Mammary epithelial cell (primary cell): ENCODE measurements at regions of chr2 and their contacts with region 1.

Region 1: DNA sequence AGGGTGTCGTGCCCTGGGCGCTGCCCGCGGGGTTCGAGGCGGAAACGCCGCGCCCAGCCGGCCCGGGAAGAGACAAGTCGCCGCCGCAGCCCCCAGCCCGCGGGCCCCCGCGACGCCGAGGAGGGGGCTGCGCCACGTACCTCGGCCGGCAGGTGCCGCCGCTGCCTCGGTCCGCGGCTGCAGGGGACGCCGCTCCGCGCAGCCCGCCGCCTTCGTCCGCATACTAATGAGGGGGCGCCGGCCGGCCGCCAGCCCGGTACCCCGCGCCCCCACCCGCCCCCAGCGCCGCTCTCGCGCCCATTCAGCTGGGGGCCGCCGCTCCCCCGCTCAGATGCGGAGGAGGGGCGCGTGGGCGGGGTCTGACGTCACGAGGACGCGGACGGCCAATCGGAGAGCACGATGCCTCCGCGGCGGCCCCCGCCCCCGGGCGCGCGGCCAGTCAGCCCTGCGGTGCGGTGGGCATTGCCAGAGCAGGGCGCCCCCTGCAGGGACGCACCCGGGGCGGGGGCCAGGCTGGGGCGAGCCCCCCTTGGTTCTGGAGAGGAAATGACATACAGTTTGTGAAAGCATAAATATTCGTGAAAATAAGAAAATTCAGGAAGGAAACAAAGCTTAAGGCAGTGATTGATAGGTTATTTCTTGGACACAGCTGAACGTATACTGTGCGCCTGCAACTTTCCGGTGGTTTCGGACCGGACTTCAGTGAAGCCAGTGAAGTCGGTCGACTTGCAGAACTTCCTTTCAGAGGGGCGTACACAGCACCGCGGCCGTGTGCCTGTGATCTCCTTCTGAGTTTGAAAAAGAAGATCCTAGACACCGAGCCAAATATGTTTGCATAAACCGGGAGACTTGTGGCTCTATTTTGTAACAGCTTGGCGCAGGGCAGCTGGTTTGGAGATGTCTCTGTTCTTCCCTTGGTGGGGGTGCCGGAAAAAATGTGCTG is at the start of gene ST3GAL5:
- DNase-seq: peak; percentile 72
- H3K4me3 ChIP-seq: peak within 1 kb of the TSS; percentile 66 to 88 (median 70)
- H3K27ac ChIP-seq: peak within 1 kb of the TSS; percentile 56
- H3K4me1 ChIP-seq: peaks cover 55% of the 10 kb centered on the region
- H3K27me3 ChIP-seq: no peaks in the 10 kb centered on the region
- CTCF ChIP-seq: peak; percentile 68 to 69
- total RNA-seq, gene ST3GAL5: 12.0 to 25.1 TPM

Region 2: GRCh38 chr2:85826990-85827878 is 61.7 kb before region 1 on chr2:
- CTCF ChIA-PET with region 1: interaction called, 10 read pairs
- dilution Hi-C with region 1: no loop called
- in situ Hi-C with region 1: no loop called
- intact Hi-C with region 1: loop called (anchors 1 kb)
- DNase-seq: peak; percentile 34
- H3K4me3 ChIP-seq: peak overlapping the region in 1 of 3 experiments; percentile 9
- H3K27ac ChIP-seq: no peak overlapping the region
- H3K4me1 ChIP-seq: no peaks in the 10 kb centered on the region
- H3K27me3 ChIP-seq: peaks cover 3% of the 10 kb centered on the region
- CTCF ChIP-seq: peak; percentile 72 to 82

Region 3: GRCh38 chr2:85930129-85931124 is 41.5 kb after region 1 on chr2:
- CTCF ChIA-PET with region 1: no interaction called
- dilution Hi-C with region 1: no loop called
- in situ Hi-C with region 1: no loop called
- intact Hi-C with region 1: loop called (anchors 2 kb)
- DNase-seq: peak; percentile 22
- H3K4me3 ChIP-seq: no peak overlapping the region
- H3K27ac ChIP-seq: no peak overlapping the region
- H3K4me1 ChIP-seq: peaks cover 25% of the 10 kb centered on the region
- H3K27me3 ChIP-seq: no peaks in the 10 kb centered on the region
- CTCF ChIP-seq: no peak

Region 4: GRCh38 chr2:85942346-85942957 is 53.5 kb after region 1 on chr2:
- CTCF ChIA-PET with region 1: no interaction called
- dilution Hi-C with region 1: no loop called
- in situ Hi-C with region 1: no loop called
- intact Hi-C with region 1: no loop called
- DNase-seq: no peak
- H3K4me3 ChIP-seq: no peak overlapping the region
- H3K27ac ChIP-seq: no peak overlapping the region
- H3K4me1 ChIP-seq: no peaks in the 10 kb centered on the region
- H3K27me3 ChIP-seq: no peaks in the 10 kb centered on the region
- CTCF ChIP-seq: no peak

Region 5: GRCh38 chr2:86017901-86018896 is 129.2 kb after region 1 on chr2:
- CTCF ChIA-PET with region 1: no interaction called
- dilution Hi-C with region 1: no loop called
- in situ Hi-C with region 1: loop called in 1 of 2 experiments (anchors 10 kb)
- intact Hi-C with region 1: loop called (anchors 5 kb)
- DNase-seq: peak; percentile 50
- H3K4me3 ChIP-seq: no peak overlapping the region
- H3K27ac ChIP-seq: no peak overlapping the region
- H3K4me1 ChIP-seq: peaks cover 8% of the 10 kb centered on the region
- H3K27me3 ChIP-seq: no peaks in the 10 kb centered on the region
- CTCF ChIP-seq: no peak

Region 6: GRCh38 chr2:86062043-86062442 is 173.1 kb after region 1 on chr2:
- CTCF ChIA-PET with region 1: no interaction called
- dilution Hi-C with region 1: no loop called
- in situ Hi-C with region 1: loop called in 1 of 2 experiments (anchors 5 kb)
- intact Hi-C with region 1: no loop called
- DNase-seq: peak; percentile 14
- H3K4me3 ChIP-seq: no peak overlapping the region
- H3K27ac ChIP-seq: no peak overlapping the region
- H3K4me1 ChIP-seq: no peaks in the 10 kb centered on the region
- H3K27me3 ChIP-seq: no peaks in the 10 kb centered on the region
- CTCF ChIP-seq: no peak